Ovary (tissue), 10 donors: ENCODE measurements at regions of chr2 and their contacts with region 1.

Region 1: GRCh38 chr2:64330281-64331113 is 123.5 kb upstream of the LGALSL start:
- DNase-seq: peak; percentile 82 to 89 (median 83)
- H3K4me3 ChIP-seq: peak overlapping the region; percentile 7
- H3K27ac ChIP-seq: peak overlapping the region; percentile 4 to 70
- H3K4me1 ChIP-seq: peaks cover 6% of the 10 kb centered on the region
- H3K27me3 ChIP-seq: no peaks in the 10 kb centered on the region
- CTCF ChIP-seq: peak; percentile 79 to 89 (median 88)
- EP300 ChIP-seq: no peak
- POLR2A ChIP-seq: no peak

Region 2: GRCh38 chr2:64040161-64040560 is 290.3 kb before region 1 on chr2:
- intact Hi-C with region 1: loop called in 1 of 4 experiments (anchors 10 kb)
- DNase-seq: no peak
- H3K4me3 ChIP-seq: no peak overlapping the region
- H3K27ac ChIP-seq: no peak overlapping the region
- H3K4me1 ChIP-seq: no peaks in the 10 kb centered on the region
- H3K27me3 ChIP-seq: no peaks in the 10 kb centered on the region
- CTCF ChIP-seq: no peak
- EP300 ChIP-seq: no peak
- POLR2A ChIP-seq: no peak

Region 3: DNA sequence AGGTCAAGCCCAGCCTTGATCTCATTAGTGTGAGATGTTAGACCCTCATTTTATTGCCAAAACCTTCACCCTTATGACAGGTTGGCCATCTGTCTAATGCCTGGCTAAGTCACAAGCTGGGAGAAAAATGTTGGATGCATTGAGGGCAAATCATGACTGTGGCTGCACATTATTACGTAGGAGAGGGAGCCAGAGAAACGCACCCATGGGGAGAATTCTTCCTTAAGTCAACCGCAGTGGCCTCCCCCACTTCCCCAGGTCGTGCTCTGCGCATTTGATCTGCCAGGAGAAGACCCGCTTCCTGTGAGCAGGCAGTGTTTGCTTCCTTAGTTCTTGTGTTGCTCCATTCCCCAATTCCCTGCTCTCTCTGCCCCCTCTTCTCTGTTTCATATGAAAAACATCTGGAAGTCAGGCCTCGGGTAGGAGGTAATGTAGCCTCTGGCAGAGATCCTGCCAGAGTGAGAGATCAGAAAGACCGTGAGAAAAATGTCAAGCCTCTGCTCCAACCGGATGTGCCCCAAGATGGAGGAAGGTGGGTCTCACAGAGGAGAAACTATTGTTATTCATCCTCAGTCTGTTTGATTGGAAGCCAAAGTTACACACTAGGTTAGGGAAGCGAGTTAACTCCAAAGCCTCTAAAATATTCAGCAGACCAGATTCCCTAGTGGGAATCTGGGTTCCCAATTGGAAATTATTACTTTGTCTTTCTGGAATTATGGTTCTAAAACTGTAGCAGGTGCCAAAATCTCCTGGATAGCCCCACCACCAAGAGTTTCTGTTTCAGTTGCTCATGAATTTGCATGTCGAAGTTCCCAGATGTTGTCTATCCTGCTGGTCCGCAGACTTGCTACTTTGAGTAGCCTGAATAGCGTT is 41.9 kb before region 1 on chr2:
- intact Hi-C with region 1: no loop called
- DNase-seq: peak in 1 of 5 donors; percentile 17
- H3K4me3 ChIP-seq: no peak overlapping the region
- H3K27ac ChIP-seq: no peak overlapping the region
- H3K4me1 ChIP-seq: peaks cover 11% of the 10 kb centered on the region
- H3K27me3 ChIP-seq: no peaks in the 10 kb centered on the region
- CTCF ChIP-seq: no peak
- EP300 ChIP-seq: no peak
- POLR2A ChIP-seq: no peak

Region 4: GRCh38 chr2:64318476-64318748 is 12.1 kb before region 1 on chr2:
- intact Hi-C with region 1: no loop called
- DNase-seq: no peak
- H3K4me3 ChIP-seq: no peak overlapping the region
- H3K27ac ChIP-seq: no peak overlapping the region
- H3K4me1 ChIP-seq: no peaks in the 10 kb centered on the region
- H3K27me3 ChIP-seq: no peaks in the 10 kb centered on the region
- CTCF ChIP-seq: no peak
- EP300 ChIP-seq: no peak
- POLR2A ChIP-seq: no peak

Region 5: DNA sequence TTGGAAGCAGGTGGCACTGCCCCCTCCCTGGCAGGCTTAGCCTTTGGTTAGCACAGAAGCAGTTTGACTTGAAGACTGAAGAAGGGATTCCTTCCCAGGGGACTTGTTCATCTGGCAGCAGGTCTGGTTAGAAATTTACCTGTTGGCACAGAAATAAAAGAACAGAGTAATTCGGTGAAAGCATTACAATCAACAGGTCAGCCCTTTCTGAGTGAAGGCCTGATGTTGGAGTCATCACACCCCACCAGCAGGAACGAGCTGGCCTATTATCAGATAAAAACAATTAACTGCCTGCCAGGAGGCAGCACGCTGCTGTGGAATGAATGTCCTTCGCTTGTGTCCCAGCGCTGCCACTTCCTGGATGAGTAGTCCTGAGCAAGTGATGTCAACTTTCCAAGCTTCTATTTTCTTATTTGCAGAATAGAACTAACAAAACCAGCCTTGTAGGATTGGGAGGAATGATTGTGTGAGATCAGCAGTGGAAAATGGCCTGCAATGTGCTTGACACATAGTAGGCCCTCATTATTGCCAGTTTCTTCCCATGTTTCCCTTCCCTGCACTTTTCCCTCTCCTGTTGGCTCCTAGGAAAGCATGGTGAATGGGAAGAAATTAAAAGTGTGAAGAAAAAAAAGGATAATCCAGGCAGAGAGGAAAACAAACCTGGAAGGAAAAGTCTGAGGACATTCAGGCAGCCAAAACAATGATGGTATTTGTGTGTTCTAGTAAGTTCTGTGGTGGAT is 152.4 kb after region 1 on chr2:
- intact Hi-C with region 1: loop called (anchors 2 to 10 kb)
- DNase-seq: no peak
- H3K4me3 ChIP-seq: no peak overlapping the region
- H3K27ac ChIP-seq: no peak overlapping the region
- H3K4me1 ChIP-seq: peaks cover 2% of the 10 kb centered on the region
- H3K27me3 ChIP-seq: no peaks in the 10 kb centered on the region
- CTCF ChIP-seq: no peak
- EP300 ChIP-seq: no peak
- POLR2A ChIP-seq: no peak

Region 6: DNA sequence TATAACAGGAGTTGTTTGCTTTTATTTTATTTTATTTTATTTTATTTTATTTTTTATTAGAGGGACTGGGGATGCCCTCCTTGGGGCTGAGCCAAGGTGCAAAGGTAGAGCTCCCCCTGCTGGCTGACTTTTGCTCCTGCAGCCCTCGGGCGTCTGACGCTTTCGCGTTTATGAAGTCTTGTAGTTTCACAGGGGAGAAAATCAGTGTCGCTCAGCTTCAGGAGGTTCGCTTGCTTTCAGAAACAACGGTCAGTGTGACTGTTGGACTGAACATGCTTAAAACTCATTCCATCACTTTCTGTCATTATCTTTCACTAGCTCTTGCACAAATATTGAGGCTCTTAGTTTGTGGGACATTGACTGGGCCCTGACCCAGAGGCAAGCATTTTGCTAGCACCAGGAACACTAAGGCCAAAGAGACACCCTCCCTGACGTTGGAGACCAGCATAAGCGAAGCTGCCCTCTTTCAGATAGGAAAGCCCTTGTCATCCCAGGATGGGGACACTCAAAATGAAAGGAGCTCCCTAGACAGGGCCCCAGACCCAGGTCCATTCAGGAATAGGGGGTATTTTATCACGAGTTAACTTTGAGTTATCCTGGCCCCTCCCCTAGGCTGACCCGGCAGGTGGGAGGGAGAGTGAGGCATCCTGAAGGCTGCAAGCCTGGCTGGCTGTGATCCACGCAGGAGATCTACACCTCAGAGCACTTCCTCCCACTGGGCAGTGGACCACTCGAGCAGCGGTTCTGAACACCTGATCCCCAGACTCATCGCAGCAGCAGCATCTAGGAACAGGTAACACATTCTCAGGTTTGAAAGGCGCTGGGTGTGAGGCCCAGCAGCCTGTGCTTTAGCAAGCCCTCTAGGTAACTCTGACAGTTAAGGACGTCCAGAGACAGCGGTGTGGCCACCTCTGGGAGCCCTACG is 157.8 kb after region 1 on chr2:
- intact Hi-C with region 1: loop called (anchors 2 to 10 kb)
- DNase-seq: peak; percentile 38 to 77 (median 73)
- H3K4me3 ChIP-seq: no peak overlapping the region
- H3K27ac ChIP-seq: no peak overlapping the region
- H3K4me1 ChIP-seq: no peaks in the 10 kb centered on the region
- H3K27me3 ChIP-seq: no peaks in the 10 kb centered on the region
- CTCF ChIP-seq: peak; percentile 65 to 75 (median 75)
- EP300 ChIP-seq: no peak
- POLR2A ChIP-seq: no peak

Region 7: GRCh38 chr2:65731476-65731875 is 1401.0 kb after region 1 on chr2:
- intact Hi-C with region 1: no loop called
- DNase-seq: no peak
- H3K4me3 ChIP-seq: no peak overlapping the region
- H3K27ac ChIP-seq: no peak overlapping the region
- H3K4me1 ChIP-seq: no peaks in the 10 kb centered on the region
- H3K27me3 ChIP-seq: no peaks in the 10 kb centered on the region
- CTCF ChIP-seq: no peak
- EP300 ChIP-seq: no peak
- POLR2A ChIP-seq: no peak